ENCODE measurements at regions of chr12 and their contacts with region 1.

Region 1: GRCh38 chr12:56417739-56418138 is 31.5 kb downstream of the TIMELESS start:
- DNase-seq: no peak
- ATAC-seq: no peak
- H3K4me3 ChIP-seq: no peak overlapping the region
- H3K4me3 Mint-ChIP-seq: no peak overlapping the region
- H3K27ac ChIP-seq: no peak overlapping the region
- H3K27ac Mint-ChIP-seq: no peak overlapping the region
- H3K4me1 ChIP-seq: no peaks in the 10 kb centered on the region
- H3K4me1 Mint-ChIP-seq: no peaks in the 10 kb centered on the region
- H3K27me3 ChIP-seq: no peaks in the 10 kb centered on the region
- H3K27me3 Mint-ChIP-seq: no peaks in the 10 kb centered on the region
- CTCF ChIP-seq: no peak

Region 2: DNA sequence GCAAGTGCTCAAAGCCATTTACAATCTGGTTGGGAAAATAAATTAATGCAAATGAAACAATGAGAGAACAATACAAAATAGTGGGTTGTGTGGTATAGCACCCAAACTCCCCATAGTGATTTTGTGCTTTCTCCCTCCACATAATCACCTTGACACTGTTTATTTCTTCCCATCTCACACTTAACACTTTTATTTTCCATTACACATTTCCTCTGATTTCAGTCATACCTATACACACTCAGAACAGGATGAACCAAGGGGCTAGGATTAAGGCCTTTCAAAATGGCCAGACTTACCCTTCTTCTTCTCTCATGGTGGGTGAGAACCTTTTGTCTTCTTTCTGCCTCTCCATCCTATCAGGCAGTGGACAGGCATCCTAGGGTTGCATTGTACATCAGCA is 1882.3 kb before region 1 on chr12:
- CTCF ChIA-PET with region 1: no interaction called
- POLR2A ChIA-PET with region 1: no interaction called
- intact Hi-C with region 1: loop called in 1 of 2 experiments (anchors 5 kb)
- DNase-seq: no peak
- ATAC-seq: no peak
- H3K4me3 ChIP-seq: no peak overlapping the region
- H3K4me3 Mint-ChIP-seq: no peak overlapping the region
- H3K27ac ChIP-seq: no peak overlapping the region
- H3K27ac Mint-ChIP-seq: no peak overlapping the region
- H3K4me1 ChIP-seq: no peaks in the 10 kb centered on the region
- H3K4me1 Mint-ChIP-seq: no peaks in the 10 kb centered on the region
- H3K27me3 ChIP-seq: no peaks in the 10 kb centered on the region
- H3K27me3 Mint-ChIP-seq: no peaks in the 10 kb centered on the region
- CTCF ChIP-seq: no peak